ENCODE measurements at regions of chr15 and their contacts with region 1.

Region 1: GRCh38 chr15:74127260-74127953 is 3.0 kb upstream of the ISLR2 start:
- DNase-seq: peak; percentile 84 to 92 (median 91)
- ATAC-seq: peak; percentile 96
- H3K4me3 ChIP-seq: no peak overlapping the region
- H3K4me1 ChIP-seq: peaks cover 8% of the 10 kb centered on the region
- CTCF ChIP-seq: peak; percentile 98

Region 2: GRCh38 chr15:73897441-73898261 is 229.8 kb before region 1 on chr15:
- intact Hi-C with region 1: no loop called
- DNase-seq: peak; percentile 38 to 60 (median 56)
- ATAC-seq: peak; percentile 90
- H3K4me3 ChIP-seq: no peak overlapping the region
- H3K4me1 ChIP-seq: no peaks in the 10 kb centered on the region
- CTCF ChIP-seq: peak; percentile 75

Region 3: GRCh38 chr15:74311734-74312408 is 184.5 kb after region 1 on chr15:
- intact Hi-C with region 1: loop called in 1 of 2 experiments (anchors 10 kb)
- DNase-seq: peak in 1 of 3 donors; percentile 28
- ATAC-seq: peak; percentile 23
- H3K4me3 ChIP-seq: no peak overlapping the region
- H3K4me1 ChIP-seq: no peaks in the 10 kb centered on the region
- CTCF ChIP-seq: no peak

Region 4: DNA sequence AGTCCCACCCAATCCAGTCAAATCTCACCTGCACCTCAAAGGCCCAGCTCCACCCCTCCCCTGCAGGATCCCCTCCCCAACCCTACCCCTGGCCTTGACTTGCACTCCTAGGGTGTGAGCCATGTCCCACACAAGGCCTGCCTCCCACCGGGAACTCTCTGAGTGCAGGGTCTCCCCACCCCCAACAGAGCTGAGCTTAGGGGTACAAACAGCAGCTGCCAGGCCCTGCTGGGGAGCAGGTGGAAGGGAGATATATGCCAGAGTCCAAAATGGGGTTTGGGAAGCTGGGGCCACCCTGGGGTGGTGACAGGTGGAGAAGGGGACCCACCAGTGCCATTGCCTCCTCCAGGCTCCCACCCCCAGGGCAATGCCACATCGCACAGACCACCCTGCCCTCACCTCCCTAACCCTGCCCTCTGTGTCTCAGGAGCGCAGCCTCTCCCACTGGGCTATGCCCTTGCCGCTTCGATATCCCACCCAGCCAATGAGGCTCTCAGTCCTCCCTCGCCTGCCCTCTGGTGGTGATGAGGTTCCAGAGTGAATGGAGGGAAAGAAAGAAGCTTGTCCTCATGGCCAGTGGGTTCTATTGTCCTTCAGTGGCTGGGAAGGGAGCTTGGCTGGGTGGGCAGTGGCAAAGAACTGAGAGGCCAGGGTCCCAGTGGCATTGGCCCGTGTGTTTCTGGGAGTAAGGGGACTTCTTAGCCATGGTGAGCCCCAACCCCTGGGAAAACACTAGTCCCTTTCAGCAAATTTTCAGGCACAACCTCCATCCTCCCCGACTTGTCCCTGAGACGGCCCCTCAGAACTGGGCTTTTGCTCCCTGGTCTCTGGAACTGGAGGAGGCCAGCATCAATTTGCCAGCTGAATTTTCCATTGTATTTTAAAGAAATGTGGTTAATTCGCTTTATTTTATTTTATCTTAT is 193.2 kb after region 1 on chr15:
- intact Hi-C with region 1: loop called (anchors 2 to 10 kb)
- DNase-seq: peak in 2 of 3 donors; percentile 42 to 65
- ATAC-seq: peak; percentile 24
- H3K4me3 ChIP-seq: no peak overlapping the region
- H3K4me1 ChIP-seq: no peaks in the 10 kb centered on the region
- CTCF ChIP-seq: no peak